Heart left ventricle (tissue), 16 donors: ENCODE measurements at regions of chr12 and their contacts with region 1.

Region 1: DNA sequence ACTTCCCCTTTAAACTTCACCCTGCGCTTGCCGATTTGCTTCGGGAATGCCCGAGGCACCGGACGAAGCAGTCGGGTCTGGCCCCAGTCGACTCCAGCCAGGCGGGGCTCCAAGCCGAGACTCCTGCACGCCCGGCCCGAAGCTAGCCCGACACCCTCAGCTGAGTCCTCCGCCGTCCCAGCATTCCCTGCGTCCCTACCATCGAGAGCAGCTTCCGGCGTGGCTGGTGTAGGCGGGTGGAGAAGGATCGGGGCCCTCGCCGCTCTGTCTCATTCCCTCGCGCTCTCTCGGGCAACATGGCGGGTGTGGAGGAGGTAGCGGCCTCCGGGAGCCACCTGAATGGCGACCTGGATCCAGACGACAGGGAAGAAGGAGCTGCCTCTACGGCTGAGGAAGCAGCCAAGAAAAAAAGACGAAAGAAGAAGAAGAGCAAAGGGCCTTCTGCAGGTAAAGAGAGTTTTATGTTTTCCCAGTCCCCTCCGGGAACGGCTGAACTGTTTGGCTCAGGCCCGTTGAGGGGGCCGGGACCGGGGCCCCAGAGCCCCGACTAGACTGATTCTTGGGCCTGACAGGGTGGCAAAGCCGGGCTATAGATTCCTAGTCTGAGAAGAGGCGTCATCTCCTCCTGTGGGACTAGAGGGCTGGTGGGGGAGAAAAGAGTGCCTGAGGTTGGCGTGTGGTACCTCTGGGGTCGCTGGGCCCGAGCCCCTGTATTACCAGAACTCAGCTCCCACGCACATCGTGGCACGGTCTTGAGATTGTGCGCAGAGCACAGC is at the start of gene METAP2:
- DNase-seq: peak; percentile 96 to 98 (median 98)
- ATAC-seq: peak; percentile 100
- H3K4me3 ChIP-seq: peak within 1 kb of the TSS; percentile 48 to 98 (median 92)
- H3K27ac ChIP-seq: peak within 1 kb of the TSS; percentile 85 to 98 (median 94)
- H3K4me1 ChIP-seq: peaks cover 0 to 35% (median 19%) of the 10 kb centered on the region in 12 donors
- H3K27me3 ChIP-seq: no peaks in the 10 kb centered on the region
- CTCF ChIP-seq: no peak
- POLR2A ChIP-seq: peak in 1 of 2 donors; percentile 67
- total RNA-seq, gene METAP2: 50.9 to 69.8 (median 55.5) TPM

Region 2: GRCh38 chr12:95385246-95386035 is 88.6 kb before region 1 on chr12:
- intact Hi-C with region 1: loop called in 4 of 10 experiments (anchors 1 to 5 kb)
- DNase-seq: peak in 3 of 5 donors; percentile 27 to 40 (median 27)
- ATAC-seq: peak; percentile 93 to 95 (median 94)
- H3K4me3 ChIP-seq: peak overlapping the region in 11 of 12 donors; percentile 23 to 57 (median 46)
- H3K27ac ChIP-seq: peak overlapping the region; percentile 56 to 89 (median 75)
- H3K4me1 ChIP-seq: peaks cover 0 to 24% (median 6%) of the 10 kb centered on the region in 12 donors
- H3K27me3 ChIP-seq: no peaks in the 10 kb centered on the region
- CTCF ChIP-seq: peak in 1 of 12 donors; percentile 9
- POLR2A ChIP-seq: no peak

Region 3: GRCh38 chr12:95418142-95418541 is 55.9 kb before region 1 on chr12:
- intact Hi-C with region 1: loop called in 1 of 10 experiments (anchors 5 kb)
- DNase-seq: peak in 1 of 5 donors; percentile 16
- ATAC-seq: peak; percentile 89 to 97 (median 94)
- H3K4me3 ChIP-seq: peak overlapping the region in 2 of 12 donors; percentile 15
- H3K27ac ChIP-seq: peak overlapping the region in 10 of 12 donors; percentile 22 to 84 (median 64)
- H3K4me1 ChIP-seq: peaks cover 0 to 14% (median 2%) of the 10 kb centered on the region in 12 donors
- H3K27me3 ChIP-seq: no peaks in the 10 kb centered on the region
- CTCF ChIP-seq: no peak
- POLR2A ChIP-seq: no peak

Region 4: GRCh38 chr12:95790033-95790911 is 316.2 kb after region 1 on chr12 and contains the start of gene NTN4:
- intact Hi-C with region 1: no loop called
- DNase-seq: peak; percentile 62 to 82 (median 69)
- ATAC-seq: peak; percentile 37 to 80 (median 64)
- H3K4me3 ChIP-seq: peak within 1 kb of the TSS; percentile 66 to 94 (median 88)
- H3K27ac ChIP-seq: peak within 1 kb of the TSS; percentile 75 to 93 (median 88)
- H3K4me1 ChIP-seq: peaks cover 5 to 49% (median 29%) of the 10 kb centered on the region in 12 donors
- H3K27me3 ChIP-seq: peaks cover 0 to 39% (median 0%) of the 10 kb centered on the region in 9 donors
- CTCF ChIP-seq: no peak
- POLR2A ChIP-seq: peak in 1 of 2 donors; percentile 41
- total RNA-seq, gene NTN4: 58.4 to 116 (median 71.5) TPM